Activated naive CD4-positive, alpha-beta T cell treated with anti-CD3 and anti-CD28 coated beads for 36 hours (primary cell): ENCODE measurements at regions of chr12 and their contacts with region 1.

Region 1: DNA sequence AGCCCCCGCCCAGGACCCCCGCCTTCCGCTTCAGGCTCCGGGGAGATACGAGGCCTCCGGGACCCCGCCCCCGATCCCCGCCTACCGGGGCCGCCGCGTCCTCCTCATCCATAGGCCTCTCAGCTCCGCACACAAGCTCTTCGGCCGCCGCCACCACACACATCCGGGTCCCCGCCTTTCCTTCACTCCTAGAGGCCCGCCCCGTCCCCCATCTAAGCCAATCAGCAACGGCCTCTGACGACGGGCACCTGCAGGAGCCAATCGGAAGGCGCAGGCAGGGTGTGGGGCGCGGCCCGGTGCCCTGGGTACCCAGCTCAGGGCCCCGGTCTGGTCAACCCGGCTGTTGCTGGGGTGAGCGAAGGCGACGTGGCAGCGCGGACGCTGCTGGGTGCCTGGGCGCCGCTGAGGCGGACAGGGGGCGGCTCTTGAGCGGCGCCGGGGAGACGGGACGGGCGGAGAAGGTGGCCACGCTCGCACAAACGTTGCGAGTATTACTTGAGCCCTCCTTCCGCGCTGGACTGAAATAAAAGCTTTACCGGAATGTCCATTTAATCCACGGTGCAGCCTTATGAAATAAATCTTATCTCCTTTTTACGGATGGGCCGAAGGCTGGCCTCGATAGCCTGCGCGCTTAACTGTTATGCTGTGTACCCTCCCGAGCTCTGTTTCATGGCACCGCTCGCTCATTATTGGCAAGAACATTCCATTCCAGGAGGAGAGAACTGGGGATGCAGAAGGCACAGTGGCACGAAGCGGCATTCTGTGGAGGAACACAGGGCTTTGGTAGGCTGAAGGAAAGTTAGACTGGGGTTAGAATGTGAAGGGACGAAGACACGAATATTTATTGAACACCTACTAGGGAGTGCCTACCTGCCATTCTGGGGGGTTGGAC is at the start of gene SPRYD3:
- DNase-seq: peak; percentile 98
- H3K4me3 Mint-ChIP-seq: peak within 1 kb of the TSS; percentile 88
- H3K27ac Mint-ChIP-seq: peak within 1 kb of the TSS; percentile 85
- H3K4me1 Mint-ChIP-seq: peaks cover 31% of the 10 kb centered on the region
- H3K27me3 Mint-ChIP-seq: no peaks in the 10 kb centered on the region
- total RNA-seq, gene SPRYD3: 20.1 to 20.2 TPM

Region 2: GRCh38 chr12:53054112-53054833 is 25.2 kb before region 1 on chr12:
- CTCF ChIA-PET with region 1: interaction called, 3 read pairs
- intact Hi-C with region 1: loop called (anchors 1 kb)
- DNase-seq: peak; percentile 95
- H3K4me3 Mint-ChIP-seq: peak overlapping the region; percentile 95
- H3K27ac Mint-ChIP-seq: peak overlapping the region; percentile 83
- H3K4me1 Mint-ChIP-seq: peaks cover 12% of the 10 kb centered on the region
- H3K27me3 Mint-ChIP-seq: no peaks in the 10 kb centered on the region

Region 3: DNA sequence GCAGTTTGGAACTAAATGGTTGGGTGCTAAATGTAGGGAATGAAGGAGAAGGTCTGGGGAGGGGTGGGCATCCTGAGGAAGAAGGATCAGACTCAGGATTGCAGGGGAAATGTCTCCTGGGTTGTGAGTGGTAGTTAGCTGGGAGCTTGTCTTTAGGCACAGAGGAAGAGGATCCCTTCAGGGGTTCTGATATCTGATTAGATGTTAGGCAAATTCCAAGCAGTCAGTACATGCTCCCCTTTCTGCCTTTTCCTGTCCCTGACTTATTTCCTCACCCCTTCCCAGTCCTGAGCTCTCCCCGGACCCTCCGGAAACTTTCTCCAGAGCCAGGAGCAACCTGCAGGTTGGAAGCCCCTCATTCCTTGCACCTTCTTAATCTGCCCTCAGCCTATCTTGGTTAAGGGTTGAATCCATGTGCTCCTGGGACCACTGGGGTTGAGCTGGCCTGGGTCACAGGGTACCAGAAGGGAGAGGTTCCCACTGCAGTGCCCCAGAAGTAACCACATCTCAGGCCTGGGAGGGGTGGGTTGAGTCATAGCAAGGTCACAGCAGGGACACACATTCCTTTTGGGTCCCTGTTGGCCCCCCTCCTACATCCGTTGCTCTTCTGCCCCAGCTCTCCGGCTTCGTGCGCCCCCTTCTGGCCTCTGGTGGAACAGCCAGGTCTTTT is 19.6 kb after region 1 on chr12:
- CTCF ChIA-PET with region 1: interaction called, 360 read pairs
- intact Hi-C with region 1: loop called (anchors 1 kb)
- DNase-seq: peak; percentile 95
- H3K4me3 Mint-ChIP-seq: peak overlapping the region; percentile 44
- H3K27ac Mint-ChIP-seq: no peak overlapping the region
- H3K4me1 Mint-ChIP-seq: peaks cover 40% of the 10 kb centered on the region
- H3K27me3 Mint-ChIP-seq: peaks cover 6% of the 10 kb centered on the region

Region 4: DNA sequence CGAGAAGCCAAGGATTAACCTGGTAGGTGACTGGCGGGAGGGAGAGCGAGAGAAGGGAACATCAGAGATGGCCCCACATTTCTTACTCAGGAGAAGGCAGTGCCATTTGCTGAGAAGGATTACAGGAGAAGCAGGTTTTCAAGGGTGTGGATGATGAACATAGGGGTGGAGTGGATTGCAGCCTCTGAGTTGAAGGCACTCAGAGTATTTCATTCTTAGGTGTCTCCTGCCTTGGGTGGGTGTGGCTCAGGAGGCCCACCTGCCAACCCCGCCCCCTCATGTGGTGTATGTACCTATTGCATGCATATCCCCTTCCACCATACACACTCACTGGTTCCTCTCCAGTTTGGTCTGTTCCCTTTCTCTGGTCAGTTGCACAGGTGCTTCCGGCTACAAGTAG is 195.0 kb after region 1 on chr12:
- CTCF ChIA-PET with region 1: no interaction called
- intact Hi-C with region 1: no loop called
- DNase-seq: no peak
- H3K4me3 Mint-ChIP-seq: no peak overlapping the region
- H3K27ac Mint-ChIP-seq: no peak overlapping the region
- H3K4me1 Mint-ChIP-seq: peaks cover 11% of the 10 kb centered on the region
- H3K27me3 Mint-ChIP-seq: no peaks in the 10 kb centered on the region

Region 5: GRCh38 chr12:53295070-53295890 is 215.8 kb after region 1 on chr12 and contains the start of gene PFDN5:
- CTCF ChIA-PET with region 1: interaction called, 3 read pairs
- intact Hi-C with region 1: loop called (anchors 1 kb)
- DNase-seq: peak; percentile 94
- H3K4me3 Mint-ChIP-seq: peak within 1 kb of the TSS; percentile 98
- H3K27ac Mint-ChIP-seq: peak within 1 kb of the TSS; percentile 95
- H3K4me1 Mint-ChIP-seq: peaks cover 53% of the 10 kb centered on the region
- H3K27me3 Mint-ChIP-seq: no peaks in the 10 kb centered on the region
- total RNA-seq, gene PFDN5: 376 to 383 TPM

Region 6: GRCh38 chr12:53379389-53380103 is 300.1 kb after region 1 on chr12:
- CTCF ChIA-PET with region 1: no interaction called
- intact Hi-C with region 1: loop called (anchors 1 kb)
- DNase-seq: peak; percentile 99
- H3K4me3 Mint-ChIP-seq: no peak overlapping the region
- H3K27ac Mint-ChIP-seq: no peak overlapping the region
- H3K4me1 Mint-ChIP-seq: peaks cover 48% of the 10 kb centered on the region
- H3K27me3 Mint-ChIP-seq: no peaks in the 10 kb centered on the region

Region 7: DNA sequence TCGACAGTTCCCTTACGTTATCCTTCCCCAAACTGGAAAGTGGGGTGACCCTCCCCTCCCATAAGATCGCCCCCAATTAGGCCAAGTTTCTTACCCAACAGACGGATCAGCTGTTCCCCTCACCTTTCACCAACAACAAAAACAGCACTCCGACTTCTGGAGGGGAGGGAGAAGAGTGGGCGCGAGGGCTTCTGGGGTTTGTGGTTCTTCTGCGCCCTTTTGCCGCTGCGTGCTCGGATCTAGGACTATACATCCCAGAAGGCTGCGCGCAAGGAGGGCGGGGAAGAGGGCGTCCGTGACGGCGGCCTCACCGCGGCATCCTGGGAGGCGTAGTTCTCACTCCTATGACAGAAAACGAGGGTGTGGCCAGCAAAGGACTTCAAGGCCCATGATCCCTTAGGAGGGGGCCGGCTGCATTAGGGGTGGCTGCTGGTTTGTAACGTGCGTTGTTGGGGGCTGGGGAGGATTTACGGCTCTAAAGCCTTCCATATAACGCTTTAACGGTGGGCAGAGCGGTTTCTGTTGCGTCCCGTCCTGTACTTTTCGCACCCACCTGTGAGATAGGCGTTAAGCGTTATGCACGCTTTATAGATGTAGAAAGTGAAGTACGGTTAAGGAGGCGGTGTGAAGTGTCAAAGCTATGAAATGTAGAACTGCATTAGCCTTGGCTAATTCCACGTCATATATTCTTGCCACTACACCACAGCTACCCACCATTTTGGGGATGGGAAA is 648.0 kb after region 1 on chr12 and contains the start of gene CALCOCO1:
- CTCF ChIA-PET with region 1: no interaction called
- intact Hi-C with region 1: loop called (anchors 2 kb)
- DNase-seq: peak; percentile 99
- H3K4me3 Mint-ChIP-seq: peak within 1 kb of the TSS; percentile 92
- H3K27ac Mint-ChIP-seq: peak within 1 kb of the TSS; percentile 87
- H3K4me1 Mint-ChIP-seq: peaks cover 16% of the 10 kb centered on the region
- H3K27me3 Mint-ChIP-seq: no peaks in the 10 kb centered on the region
- total RNA-seq, gene CALCOCO1: 8.1 to 8.3 TPM